ENCODE measurements at regions of chr2 and their contacts with region 1.

Region 1: GRCh38 chr2:96145036-96145847 is at the start of gene DUSP2:
- DNase-seq: peak; percentile 88
- H3K4me3 Mint-ChIP-seq: peak within 1 kb of the TSS; percentile 97
- H3K27ac Mint-ChIP-seq: peak within 1 kb of the TSS; percentile 99
- H3K4me1 Mint-ChIP-seq: peaks cover 55% of the 10 kb centered on the region
- H3K27me3 Mint-ChIP-seq: peaks cover 2% of the 10 kb centered on the region
- total RNA-seq, gene DUSP2: 494 and 500 TPM in 2 replicates

Region 2: DNA sequence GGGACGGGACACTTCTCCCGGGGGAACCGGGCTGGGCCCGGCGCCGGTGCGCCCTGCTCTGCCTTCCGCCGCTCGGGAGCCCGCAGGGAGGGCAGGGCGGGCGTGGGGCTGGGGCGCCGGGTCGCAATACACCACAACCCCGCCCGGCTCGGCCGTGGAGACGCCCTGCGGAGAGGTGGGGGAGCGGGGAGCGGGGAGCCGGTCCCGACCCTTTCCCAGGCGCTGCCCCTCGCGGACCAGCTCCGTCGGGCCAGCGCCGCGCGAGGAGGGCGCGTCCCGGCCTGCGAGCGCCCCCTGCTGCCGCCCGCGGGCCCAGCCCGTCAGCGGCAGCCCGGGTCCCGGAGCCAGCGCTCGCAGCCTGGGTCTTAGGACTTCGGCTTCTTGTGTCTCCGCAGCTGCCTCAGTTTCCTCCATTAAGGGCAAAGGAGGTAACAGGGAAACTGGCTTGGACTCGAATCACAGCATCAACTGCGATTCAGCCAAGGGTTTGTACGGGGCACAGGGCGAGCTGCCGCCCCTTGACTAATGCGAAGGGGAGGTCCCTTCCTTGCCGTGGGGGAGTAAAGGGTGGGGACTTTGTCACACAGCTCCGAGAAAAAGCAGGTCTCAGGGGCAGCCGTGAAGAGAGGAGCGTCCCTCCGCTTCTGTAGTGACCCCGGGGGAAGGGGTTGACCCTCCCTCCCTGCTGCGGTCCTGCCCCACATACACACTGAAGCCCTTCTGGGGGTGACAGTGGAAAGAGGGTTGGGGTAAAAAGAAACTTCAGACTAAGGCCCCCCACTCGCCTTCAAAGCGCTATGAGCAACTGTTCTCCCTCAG is 28.2 kb before region 1 on chr2:
- intact Hi-C with region 1: loop called (anchors 2 kb)
- DNase-seq: peak; percentile 61
- H3K4me3 Mint-ChIP-seq: peak overlapping the region; percentile 75
- H3K27ac Mint-ChIP-seq: no peak overlapping the region
- H3K4me1 Mint-ChIP-seq: peaks cover 28% of the 10 kb centered on the region
- H3K27me3 Mint-ChIP-seq: peaks cover 37% of the 10 kb centered on the region

Region 3: GRCh38 chr2:96164459-96165184 is 19.4 kb after region 1 on chr2:
- intact Hi-C with region 1: loop called (anchors 1 kb)
- DNase-seq: peak; percentile 49
- H3K4me3 Mint-ChIP-seq: peak overlapping the region; percentile 81
- H3K27ac Mint-ChIP-seq: peak overlapping the region; percentile 99
- H3K4me1 Mint-ChIP-seq: peaks cover 60% of the 10 kb centered on the region
- H3K27me3 Mint-ChIP-seq: no peaks in the 10 kb centered on the region

Region 4: GRCh38 chr2:96208143-96209010 is 63.1 kb after region 1 on chr2 and contains the start of gene STARD7:
- intact Hi-C with region 1: loop called (anchors 1 kb)
- DNase-seq: peak; percentile 98
- H3K4me3 Mint-ChIP-seq: peak within 1 kb of the TSS; percentile 96
- H3K27ac Mint-ChIP-seq: peak within 1 kb of the TSS; percentile 94
- H3K4me1 Mint-ChIP-seq: peaks cover 57% of the 10 kb centered on the region
- H3K27me3 Mint-ChIP-seq: no peaks in the 10 kb centered on the region
- total RNA-seq, gene STARD7: 216 and 229 TPM in 2 replicates

Region 5: GRCh38 chr2:96320728-96321622 is 175.7 kb after region 1 on chr2:
- intact Hi-C with region 1: loop called (anchors 5 kb)
- DNase-seq: peak; percentile 26
- H3K4me3 Mint-ChIP-seq: peak overlapping the region; percentile 88
- H3K27ac Mint-ChIP-seq: peak overlapping the region; percentile 85
- H3K4me1 Mint-ChIP-seq: peaks cover 63% of the 10 kb centered on the region
- H3K27me3 Mint-ChIP-seq: no peaks in the 10 kb centered on the region

Region 6: DNA sequence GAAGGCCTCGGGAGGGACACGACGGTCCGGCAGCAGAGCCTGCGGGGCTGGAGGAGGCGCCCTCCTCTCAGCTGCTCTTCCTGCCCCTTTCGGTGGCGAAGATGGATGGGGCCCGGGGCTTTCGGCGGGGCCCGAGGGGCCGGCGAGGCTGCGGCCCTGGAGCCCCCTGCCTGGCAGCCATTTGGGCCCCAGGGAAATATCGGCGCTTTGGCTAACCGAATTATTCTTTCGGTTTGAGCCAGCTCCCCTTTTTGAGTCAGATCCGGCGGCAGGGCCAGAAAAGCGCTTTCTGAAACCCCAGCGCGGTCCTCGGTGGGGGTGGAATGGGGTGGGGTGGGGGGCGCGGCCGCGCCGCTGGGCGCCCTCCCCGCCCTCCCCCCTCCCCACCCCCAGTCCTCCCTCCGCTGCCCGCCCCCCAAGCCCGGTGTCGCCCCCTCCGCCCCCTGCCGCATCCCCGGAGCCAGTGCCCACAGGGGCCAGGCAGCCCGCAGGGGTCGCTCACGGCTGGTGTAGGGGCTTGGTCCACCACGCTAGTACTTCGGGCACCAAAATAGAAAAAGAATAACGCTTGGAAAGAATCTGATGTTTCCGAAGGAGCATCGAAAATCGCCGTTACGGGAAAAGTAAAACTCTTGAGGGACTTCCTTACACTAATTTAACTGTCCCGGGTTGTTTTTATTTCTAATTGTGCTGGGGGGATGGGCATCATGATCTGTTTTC is 382.2 kb after region 1 on chr2:
- intact Hi-C with region 1: loop called (anchors 1 kb)
- DNase-seq: peak; percentile 70
- H3K4me3 Mint-ChIP-seq: peak overlapping the region; percentile 69
- H3K27ac Mint-ChIP-seq: peak overlapping the region; percentile 97
- H3K4me1 Mint-ChIP-seq: peaks cover 93% of the 10 kb centered on the region
- H3K27me3 Mint-ChIP-seq: no peaks in the 10 kb centered on the region

Region 7: DNA sequence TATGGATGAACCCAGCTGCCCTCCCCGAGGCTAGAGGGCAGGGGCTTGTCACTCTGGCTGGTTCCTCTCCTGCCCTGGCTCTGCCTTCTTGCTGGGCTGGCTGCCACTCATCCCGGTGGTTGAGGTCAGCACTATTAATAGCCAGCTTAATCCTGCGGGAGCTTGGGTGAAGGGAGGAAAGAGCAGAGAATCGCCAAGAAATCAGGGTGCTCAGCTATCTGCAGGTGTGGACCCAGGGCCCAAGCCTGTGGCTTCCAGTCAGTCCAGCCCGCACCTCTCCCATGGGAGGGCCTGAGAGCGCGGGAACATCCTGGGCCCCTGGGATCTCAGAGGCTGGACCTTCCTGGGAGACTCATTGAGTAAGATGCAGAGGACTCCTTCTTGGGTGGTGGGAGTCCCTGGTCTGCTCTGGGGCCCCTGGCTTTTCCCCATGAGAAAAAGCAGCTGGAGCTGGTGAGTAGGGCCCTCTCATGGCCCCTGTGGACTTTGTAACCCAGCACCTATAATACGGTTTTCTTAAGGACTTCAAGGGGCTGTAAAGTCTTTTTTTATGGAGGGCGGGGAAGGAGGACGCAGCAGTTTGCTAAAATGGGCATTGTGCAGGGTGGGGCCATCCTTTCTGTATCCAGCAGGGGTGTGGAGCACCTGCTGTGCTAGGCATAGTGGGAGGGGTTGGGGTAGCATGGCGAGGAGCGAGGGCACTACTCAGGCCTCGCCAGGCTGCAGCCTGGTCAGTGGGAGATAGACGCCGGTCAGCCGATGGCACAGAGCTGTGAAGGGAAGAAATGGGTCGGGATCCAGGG is 643.4 kb after region 1 on chr2:
- intact Hi-C with region 1: no loop called
- DNase-seq: no peak
- H3K4me3 Mint-ChIP-seq: no peak overlapping the region
- H3K27ac Mint-ChIP-seq: no peak overlapping the region
- H3K4me1 Mint-ChIP-seq: no peaks in the 10 kb centered on the region
- H3K27me3 Mint-ChIP-seq: no peaks in the 10 kb centered on the region

Measured in activated T-helper 1 cell treated with anti-CD3 and anti-CD28 coated beads, Interleukin-12 subunit alpha, Interleukin-12 subunit beta, Interleukin-2, Interleukin-4 antibody, amounts not matched to agents 30 ng/mL and 10 ng/mL and 1 ng/mL, durations not matched to agents 14 hours and 24 hours and 36 hours (primary cell).